ENCODE measurements at regions of chr7 and their contacts with region 1.

Region 1: GRCh38 chr7:94509879-94510581 is 421 bp downstream of the CASD1 start:
- DNase-seq: peak; percentile 60
- H3K4me3 Mint-ChIP-seq: peak overlapping the region; percentile 86
- H3K27ac Mint-ChIP-seq: peak overlapping the region; percentile 88
- H3K4me1 Mint-ChIP-seq: peaks cover 30% of the 10 kb centered on the region
- H3K27me3 Mint-ChIP-seq: no peaks in the 10 kb centered on the region

Region 2: GRCh38 chr7:93279541-93279940 is 1230.5 kb before region 1 on chr7:
- intact Hi-C with region 1: no loop called
- DNase-seq: no peak
- H3K4me3 Mint-ChIP-seq: no peak overlapping the region
- H3K27ac Mint-ChIP-seq: no peak overlapping the region
- H3K4me1 Mint-ChIP-seq: peaks cover 5% of the 10 kb centered on the region
- H3K27me3 Mint-ChIP-seq: no peaks in the 10 kb centered on the region

Region 3: DNA sequence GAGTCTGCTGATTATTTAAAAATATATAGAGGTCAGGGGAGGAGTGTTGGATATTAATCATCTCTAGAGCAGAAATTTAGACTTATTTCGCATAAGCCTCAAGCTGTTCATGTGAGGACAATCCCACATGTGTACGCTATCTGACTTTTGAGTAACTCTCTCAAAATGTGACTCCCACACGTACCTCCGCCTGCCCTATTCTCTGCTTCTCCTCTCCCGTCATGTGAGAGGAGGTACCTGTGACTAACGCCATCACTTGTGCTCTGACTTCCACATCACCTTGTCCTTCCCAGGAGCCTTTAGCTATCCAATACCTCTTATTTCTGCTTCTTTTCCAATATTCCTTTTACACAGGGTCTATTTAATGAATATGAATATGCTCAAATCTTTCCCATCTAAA is 816.2 kb before region 1 on chr7:
- intact Hi-C with region 1: no loop called
- DNase-seq: no peak
- H3K4me3 Mint-ChIP-seq: no peak overlapping the region
- H3K27ac Mint-ChIP-seq: no peak overlapping the region
- H3K4me1 Mint-ChIP-seq: no peaks in the 10 kb centered on the region
- H3K27me3 Mint-ChIP-seq: no peaks in the 10 kb centered on the region

Region 4: DNA sequence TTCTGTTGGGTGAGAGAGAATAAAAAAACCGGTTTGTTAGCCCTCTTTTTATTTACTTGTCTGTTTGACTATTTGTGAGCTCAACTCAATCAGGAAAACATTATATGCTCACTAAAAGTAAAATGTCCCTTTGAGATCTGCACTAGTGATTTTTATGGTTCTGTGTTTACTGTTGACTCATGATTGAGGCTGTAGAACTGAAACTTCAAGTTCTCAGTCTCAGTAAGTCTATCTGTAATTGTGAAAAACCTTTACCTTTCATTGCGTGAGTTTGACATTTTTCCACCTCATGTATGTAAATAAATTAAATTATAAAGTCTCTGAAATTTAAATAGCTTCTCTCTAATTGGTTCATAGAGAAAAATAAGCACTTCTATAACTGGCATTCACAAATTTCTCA is 17.4 kb before region 1 on chr7:
- intact Hi-C with region 1: no loop called
- DNase-seq: no peak
- H3K4me3 Mint-ChIP-seq: no peak overlapping the region
- H3K27ac Mint-ChIP-seq: no peak overlapping the region
- H3K4me1 Mint-ChIP-seq: no peaks in the 10 kb centered on the region
- H3K27me3 Mint-ChIP-seq: peaks cover 9% of the 10 kb centered on the region

Region 5: DNA sequence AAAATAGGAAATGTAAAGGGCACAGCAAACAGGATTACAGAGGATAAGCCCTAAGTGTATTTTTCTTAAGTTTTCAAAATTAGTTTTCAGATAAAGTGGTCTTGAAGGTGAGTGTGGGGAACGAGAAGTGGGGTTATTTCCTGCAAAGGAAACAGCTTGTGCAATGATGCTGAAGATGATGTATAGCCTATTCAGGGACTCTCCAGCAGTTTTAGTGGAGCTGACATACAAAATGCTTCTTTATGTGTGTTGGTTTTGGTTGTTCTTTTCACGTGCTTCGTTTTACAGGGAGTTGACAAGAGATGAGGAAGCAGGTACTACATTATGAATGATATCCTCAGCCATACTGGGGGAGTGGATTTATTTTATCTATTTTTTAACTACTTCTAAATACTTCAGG is 20.1 kb after region 1 on chr7:
- intact Hi-C with region 1: loop called (anchors 2 kb)
- DNase-seq: no peak
- H3K4me3 Mint-ChIP-seq: no peak overlapping the region
- H3K27ac Mint-ChIP-seq: no peak overlapping the region
- H3K4me1 Mint-ChIP-seq: no peaks in the 10 kb centered on the region
- H3K27me3 Mint-ChIP-seq: no peaks in the 10 kb centered on the region

Region 6: DNA sequence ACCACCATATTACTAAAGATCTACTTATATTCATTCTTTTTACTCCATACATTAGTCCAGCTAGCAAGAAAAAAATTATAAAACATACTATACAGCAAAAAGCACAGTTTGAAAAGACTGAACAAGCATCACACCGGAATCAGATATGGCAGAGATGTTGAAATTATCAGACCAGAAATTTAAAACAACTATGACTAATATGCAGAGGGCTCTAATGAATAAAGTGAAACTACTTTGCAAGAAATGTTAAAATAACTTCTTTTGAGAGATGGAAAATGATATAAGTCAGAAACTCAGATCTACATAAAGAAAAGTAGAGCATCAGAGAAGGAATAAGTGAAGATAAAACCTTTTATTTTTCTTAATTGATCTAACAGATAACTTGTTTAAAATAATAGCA is 95.0 kb after region 1 on chr7:
- intact Hi-C with region 1: no loop called
- DNase-seq: no peak
- H3K4me3 Mint-ChIP-seq: no peak overlapping the region
- H3K27ac Mint-ChIP-seq: no peak overlapping the region
- H3K4me1 Mint-ChIP-seq: no peaks in the 10 kb centered on the region
- H3K27me3 Mint-ChIP-seq: peaks cover 2% of the 10 kb centered on the region

Region 7: DNA sequence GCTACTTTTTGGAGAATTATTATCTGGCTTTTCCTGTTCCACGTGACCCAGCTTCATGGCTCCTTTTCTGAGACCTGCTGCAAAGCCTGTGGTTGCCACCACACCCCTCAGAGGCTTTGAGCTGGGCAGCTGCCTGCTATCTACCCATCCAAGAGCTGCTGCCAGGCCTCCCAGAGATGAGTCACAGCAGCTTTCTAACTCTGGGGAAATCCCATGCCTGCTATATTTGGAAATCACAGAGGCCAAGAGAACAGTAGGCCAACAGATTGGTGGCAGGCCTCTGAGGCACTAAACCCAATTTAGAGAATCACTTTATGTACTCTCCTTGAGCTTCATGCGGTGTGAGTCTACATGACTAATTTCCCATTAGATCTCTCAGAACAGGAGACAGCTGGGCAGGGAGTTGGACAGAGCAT is 110.7 kb after region 1 on chr7:
- intact Hi-C with region 1: loop called (anchors 2 kb)
- DNase-seq: peak; percentile 17
- H3K4me3 Mint-ChIP-seq: peak overlapping the region; percentile 27
- H3K27ac Mint-ChIP-seq: no peak overlapping the region
- H3K4me1 Mint-ChIP-seq: peaks cover 12% of the 10 kb centered on the region
- H3K27me3 Mint-ChIP-seq: peaks cover 3% of the 10 kb centered on the region

Region 8: DNA sequence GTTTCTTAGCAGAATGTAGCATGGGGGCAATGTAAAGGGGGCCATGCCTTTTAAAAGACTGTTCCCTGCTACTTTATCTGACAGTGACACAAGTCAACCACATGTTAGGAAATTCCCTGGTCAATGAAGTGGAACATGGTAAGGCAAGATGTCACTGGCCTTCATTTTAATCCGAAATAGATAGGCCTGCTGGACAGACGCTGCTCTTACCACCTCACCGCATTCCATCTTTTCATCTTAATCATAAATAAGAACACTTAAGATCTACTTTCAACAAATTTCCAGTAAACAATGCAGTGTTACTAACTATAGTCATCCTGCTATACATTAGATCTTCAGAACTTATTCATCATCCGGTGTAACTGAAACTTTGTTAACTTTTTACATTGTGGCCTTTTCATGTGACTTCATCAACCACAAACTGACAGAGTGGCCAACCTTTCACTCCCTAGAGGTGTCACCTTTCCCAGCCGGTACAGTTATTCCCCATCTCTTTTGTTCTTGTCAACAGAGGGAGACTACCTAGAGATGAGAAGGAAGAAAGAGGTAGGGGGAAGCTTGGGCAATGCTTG is 991.3 kb after region 1 on chr7:
- intact Hi-C with region 1: loop called (anchors 2 kb)
- DNase-seq: peak; percentile 22
- H3K4me3 Mint-ChIP-seq: peak overlapping the region; percentile 20
- H3K27ac Mint-ChIP-seq: peak overlapping the region; percentile 79
- H3K4me1 Mint-ChIP-seq: peaks cover 45% of the 10 kb centered on the region
- H3K27me3 Mint-ChIP-seq: peaks cover 4% of the 10 kb centered on the region

Measured in activated T-helper 1 cell treated with anti-CD3 and anti-CD28 coated beads, Interleukin-12 subunit alpha, Interleukin-12 subunit beta, Interleukin-2, Interleukin-4 antibody, amounts not matched to agents 30 ng/mL and 10 ng/mL and 1 ng/mL, durations not matched to agents 14 hours and 24 hours and 36 hours (primary cell).